ENCODE measurements at regions of chr2 and their contacts with region 1.

Region 1: DNA sequence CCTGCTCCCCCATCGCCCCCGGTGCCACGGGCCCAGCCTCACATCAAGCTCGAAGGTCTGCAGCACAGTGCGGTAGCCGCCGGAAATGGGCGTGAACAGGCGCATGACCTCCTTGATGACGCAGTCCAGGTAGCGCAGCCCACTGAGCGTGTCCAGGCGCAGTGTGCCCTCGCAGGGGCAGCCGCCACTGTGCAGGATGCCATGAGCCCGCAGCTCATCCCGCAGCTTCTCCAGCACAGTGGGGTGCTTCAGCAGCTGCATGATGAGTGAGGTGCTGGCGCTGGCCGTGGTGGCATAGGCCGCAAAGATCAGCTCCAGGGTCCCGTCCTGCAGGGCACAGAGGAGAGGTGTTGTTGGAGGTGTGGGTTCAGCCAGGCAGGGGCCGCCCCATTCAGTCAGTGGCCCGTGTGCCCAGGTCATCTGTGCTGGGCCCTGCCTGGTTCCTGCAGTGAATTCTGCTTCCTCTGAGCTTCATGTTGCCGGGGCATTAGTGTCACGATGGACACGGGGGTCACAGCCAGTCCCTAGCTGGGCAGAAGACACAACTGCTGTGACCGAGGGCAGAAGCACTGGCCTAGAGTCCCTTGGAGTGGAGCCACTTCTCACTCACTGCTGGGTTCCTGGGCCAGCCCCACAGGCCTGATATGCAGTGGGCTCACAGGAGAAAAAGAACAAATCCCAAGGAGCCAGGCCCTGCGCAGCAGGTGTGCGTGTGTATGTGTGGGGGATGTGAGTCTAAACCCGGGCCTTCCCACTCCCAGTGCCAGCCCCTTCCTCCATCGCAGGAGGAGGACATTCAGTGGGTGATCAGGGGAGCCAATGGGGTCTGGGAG is 14.5 kb downstream of the CYP26B1 start:
- DNase-seq: no peak
- ATAC-seq: no peak
- H3K4me3 Mint-ChIP-seq: no peak overlapping the region
- H3K27ac Mint-ChIP-seq: no peak overlapping the region
- H3K4me1 Mint-ChIP-seq: peaks cover 2% of the 10 kb centered on the region
- H3K27me3 Mint-ChIP-seq: peaks cover 9% of the 10 kb centered on the region
- CTCF ChIP-seq: no peak

Region 2: DNA sequence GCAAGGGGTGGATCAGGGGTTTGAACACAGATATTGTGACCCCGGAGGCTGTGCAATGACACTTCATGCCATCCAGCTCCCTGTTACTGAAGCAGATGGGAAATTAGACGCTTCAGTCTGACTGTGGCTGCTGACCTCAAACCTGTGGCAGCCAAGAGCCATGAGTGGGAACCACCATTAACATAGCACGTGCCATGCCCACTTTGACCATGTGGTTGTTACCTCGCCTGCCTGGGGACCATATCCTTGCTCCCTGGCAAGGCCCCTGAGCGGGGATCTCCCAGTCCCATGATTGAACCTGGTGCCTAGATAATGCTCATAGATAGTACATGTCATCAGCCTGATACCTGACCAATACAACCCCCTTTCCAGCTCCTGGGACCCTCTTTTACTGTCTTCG is 54.4 kb before region 1 on chr2:
- CTCF ChIA-PET with region 1: no interaction called
- POLR2A ChIA-PET with region 1: interaction called, 11 read pairs
- intact Hi-C with region 1: no loop called
- DNase-seq: no peak
- ATAC-seq: no peak
- H3K4me3 Mint-ChIP-seq: no peak overlapping the region
- H3K27ac Mint-ChIP-seq: no peak overlapping the region
- H3K4me1 Mint-ChIP-seq: no peaks in the 10 kb centered on the region
- H3K27me3 Mint-ChIP-seq: no peaks in the 10 kb centered on the region
- CTCF ChIP-seq: no peak

Region 3: GRCh38 chr2:72539071-72539552 is 405.9 kb after region 1 on chr2:
- CTCF ChIA-PET with region 1: no interaction called
- POLR2A ChIA-PET with region 1: no interaction called
- intact Hi-C with region 1: no loop called
- DNase-seq: no peak
- ATAC-seq: no peak
- H3K4me3 Mint-ChIP-seq: no peak overlapping the region
- H3K27ac Mint-ChIP-seq: no peak overlapping the region
- H3K4me1 Mint-ChIP-seq: no peaks in the 10 kb centered on the region
- H3K27me3 Mint-ChIP-seq: no peaks in the 10 kb centered on the region
- CTCF ChIP-seq: no peak